CD8-positive, alpha-beta T cell (primary cell): ENCODE measurements at regions of chr2 and their contacts with region 1.

Region 1: DNA sequence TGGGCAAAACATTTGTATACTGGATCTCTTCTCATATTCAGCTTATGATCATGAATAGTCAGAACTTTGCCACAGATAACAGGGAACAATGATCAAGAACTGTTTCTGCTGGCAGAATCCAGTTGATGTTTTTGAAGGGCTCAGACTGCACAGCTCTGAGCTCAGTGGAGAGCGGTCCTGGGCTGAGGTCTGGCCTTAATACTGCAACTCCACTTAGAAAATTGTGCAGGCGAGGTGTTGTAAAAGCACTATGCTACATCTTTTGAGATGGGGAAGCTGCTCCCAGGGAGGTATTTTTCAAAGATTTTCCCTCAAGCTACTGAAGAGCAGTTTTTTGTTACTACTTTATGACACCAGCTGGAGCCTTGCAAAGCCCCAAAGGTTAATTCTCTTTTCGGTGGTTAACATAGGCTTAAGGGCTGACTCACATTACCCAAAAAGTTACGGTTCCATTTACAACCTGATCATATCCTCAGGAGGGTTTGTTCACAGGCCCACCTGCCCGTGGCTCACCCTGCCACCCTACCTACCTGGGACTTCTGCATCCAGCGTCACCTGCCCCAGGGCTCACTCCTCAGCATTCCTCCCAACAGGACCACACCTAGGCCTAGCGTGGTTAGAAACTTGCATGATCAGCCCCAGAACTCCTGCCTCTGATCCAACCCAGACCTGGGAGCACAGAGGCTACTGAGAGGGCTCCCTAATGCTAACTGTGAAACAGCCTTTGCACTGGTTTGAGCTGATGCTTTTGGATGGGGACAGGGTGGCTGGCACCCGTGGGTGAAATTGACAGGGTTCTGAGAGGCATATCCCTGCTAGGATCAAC is 114.4 kb downstream of the NCK2 start:
- DNase-seq: peak in 5 of 9 experiments; percentile 29 to 49 (median 44)
- ATAC-seq: peak; percentile 32
- H3K4me3 ChIP-seq: no peak overlapping the region
- H3K4me3 Mint-ChIP-seq: peak overlapping the region; percentile 57
- H3K27ac ChIP-seq: peak overlapping the region; percentile 32 to 71
- H3K27ac Mint-ChIP-seq: peak overlapping the region; percentile 94
- H3K4me1 ChIP-seq: peaks cover 92% of the 10 kb centered on the region
- H3K4me1 Mint-ChIP-seq: peaks cover 91% of the 10 kb centered on the region
- H3K27me3 ChIP-seq: no peaks in the 10 kb centered on the region
- H3K27me3 Mint-ChIP-seq: no peaks in the 10 kb centered on the region
- CTCF ChIP-seq: no peak

Region 2: DNA sequence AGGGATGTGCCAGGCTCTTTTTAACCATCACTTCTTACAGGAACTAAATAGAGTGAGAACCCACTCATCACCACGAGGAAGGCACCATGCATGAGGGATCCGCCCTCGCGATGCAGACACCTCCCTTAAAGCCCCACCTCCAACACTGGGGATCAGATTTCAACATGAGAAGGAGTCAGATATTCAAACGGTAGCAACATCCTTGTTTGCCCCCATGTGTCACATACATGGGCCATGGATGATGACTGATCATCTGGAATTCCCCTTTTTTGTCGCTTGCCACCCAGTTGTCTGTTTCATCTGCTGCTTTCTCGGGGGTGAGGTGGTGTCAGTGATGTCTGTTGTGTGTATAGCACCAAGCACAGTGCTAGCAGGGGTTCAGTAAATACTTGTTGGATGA is 56.5 kb before region 1 on chr2:
- CTCF ChIA-PET with region 1: interaction called, 3 read pairs
- POLR2A ChIA-PET with region 1: interaction called, 9 read pairs
- intact Hi-C with region 1: loop called (anchors 2 to 10 kb)
- DNase-seq: peak in 8 of 9 experiments; percentile 26 to 95 (median 66)
- ATAC-seq: peak; percentile 76
- H3K4me3 ChIP-seq: peak overlapping the region in 1 of 2 experiments; percentile 9
- H3K4me3 Mint-ChIP-seq: peak overlapping the region; percentile 40
- H3K27ac ChIP-seq: peak overlapping the region; percentile 51 to 88
- H3K27ac Mint-ChIP-seq: peak overlapping the region; percentile 96
- H3K4me1 ChIP-seq: peaks cover 94% of the 10 kb centered on the region
- H3K4me1 Mint-ChIP-seq: peaks cover 93% of the 10 kb centered on the region
- H3K27me3 ChIP-seq: no peaks in the 10 kb centered on the region
- H3K27me3 Mint-ChIP-seq: no peaks in the 10 kb centered on the region
- CTCF ChIP-seq: no peak

Region 3: GRCh38 chr2:105834931-105835330 is 24.1 kb before region 1 on chr2:
- CTCF ChIA-PET with region 1: interaction called, 4 read pairs
- POLR2A ChIA-PET with region 1: interaction called, 5 read pairs
- intact Hi-C with region 1: loop called in 1 of 2 experiments (anchors 2 kb)
- DNase-seq: peak in 2 of 9 experiments; percentile 29 to 60
- ATAC-seq: peak; percentile 42
- H3K4me3 ChIP-seq: no peak overlapping the region
- H3K4me3 Mint-ChIP-seq: no peak overlapping the region
- H3K27ac ChIP-seq: peak overlapping the region; percentile 36 to 62
- H3K27ac Mint-ChIP-seq: peak overlapping the region; percentile 83
- H3K4me1 ChIP-seq: peaks cover 43% of the 10 kb centered on the region
- H3K4me1 Mint-ChIP-seq: peaks cover 73% of the 10 kb centered on the region
- H3K27me3 ChIP-seq: no peaks in the 10 kb centered on the region
- H3K27me3 Mint-ChIP-seq: no peaks in the 10 kb centered on the region
- CTCF ChIP-seq: no peak

Region 4: DNA sequence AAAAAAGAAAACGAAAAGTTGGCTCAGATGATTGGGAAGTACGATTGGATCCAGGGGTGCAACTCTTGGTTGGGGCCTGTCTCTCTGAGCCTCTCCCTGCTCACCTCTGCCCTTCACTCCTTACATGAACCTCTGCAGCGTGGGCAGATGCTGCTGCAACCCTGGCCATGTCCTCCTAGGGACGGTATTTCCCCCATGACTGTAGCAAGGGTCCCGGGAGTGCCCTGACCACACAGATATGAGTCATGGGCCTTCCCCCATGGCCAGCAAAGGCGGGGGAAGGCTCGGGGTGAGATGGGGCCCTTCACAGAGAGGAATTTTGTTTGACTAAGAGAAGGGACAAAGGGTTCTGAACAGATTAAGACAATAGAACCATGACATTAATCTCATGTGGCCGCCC is 14.6 kb after region 1 on chr2:
- CTCF ChIA-PET with region 1: interaction called, 3 read pairs
- POLR2A ChIA-PET with region 1: no interaction called
- intact Hi-C with region 1: loop called in 1 of 2 experiments (anchors 1 kb)
- DNase-seq: peak in 6 of 9 experiments; percentile 35 to 86 (median 52)
- ATAC-seq: peak; percentile 58
- H3K4me3 ChIP-seq: no peak overlapping the region
- H3K4me3 Mint-ChIP-seq: no peak overlapping the region
- H3K27ac ChIP-seq: peak overlapping the region; percentile 1 to 68
- H3K27ac Mint-ChIP-seq: peak overlapping the region; percentile 89
- H3K4me1 ChIP-seq: peaks cover 96% of the 10 kb centered on the region
- H3K4me1 Mint-ChIP-seq: peaks cover 93% of the 10 kb centered on the region
- H3K27me3 ChIP-seq: no peaks in the 10 kb centered on the region
- H3K27me3 Mint-ChIP-seq: no peaks in the 10 kb centered on the region
- CTCF ChIP-seq: no peak

Region 5: DNA sequence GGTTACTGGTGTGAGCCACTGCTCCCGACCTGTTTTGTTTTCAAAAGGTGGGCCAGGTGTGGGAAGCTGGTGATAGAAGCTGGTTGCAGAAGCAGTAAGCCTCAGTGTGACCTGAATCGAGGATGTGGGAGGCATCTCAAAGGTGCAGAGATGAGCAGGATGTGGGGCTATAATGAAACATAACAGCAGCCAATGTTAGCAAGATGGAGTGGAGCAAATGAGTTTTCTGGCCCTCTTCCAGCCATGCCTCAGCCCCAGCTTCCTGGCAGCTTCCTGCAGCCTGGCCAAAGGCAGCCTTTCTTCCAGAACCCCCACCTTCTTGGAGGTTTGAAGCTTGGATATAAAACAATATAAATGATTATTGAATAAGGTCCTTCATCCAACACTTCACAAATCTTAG is 70.4 kb after region 1 on chr2:
- CTCF ChIA-PET with region 1: no interaction called
- POLR2A ChIA-PET with region 1: interaction called, 3 read pairs
- intact Hi-C with region 1: loop called in 1 of 2 experiments (anchors 2 kb)
- DNase-seq: peak in 8 of 9 experiments; percentile 26 to 81 (median 56)
- ATAC-seq: peak; percentile 79
- H3K4me3 ChIP-seq: no peak overlapping the region
- H3K4me3 Mint-ChIP-seq: peak overlapping the region; percentile 59
- H3K27ac ChIP-seq: peak overlapping the region; percentile 3 to 49
- H3K27ac Mint-ChIP-seq: peak overlapping the region; percentile 95
- H3K4me1 ChIP-seq: peaks cover 90% of the 10 kb centered on the region
- H3K4me1 Mint-ChIP-seq: peaks cover 88% of the 10 kb centered on the region
- H3K27me3 ChIP-seq: no peaks in the 10 kb centered on the region
- H3K27me3 Mint-ChIP-seq: no peaks in the 10 kb centered on the region
- CTCF ChIP-seq: no peak

Region 6: DNA sequence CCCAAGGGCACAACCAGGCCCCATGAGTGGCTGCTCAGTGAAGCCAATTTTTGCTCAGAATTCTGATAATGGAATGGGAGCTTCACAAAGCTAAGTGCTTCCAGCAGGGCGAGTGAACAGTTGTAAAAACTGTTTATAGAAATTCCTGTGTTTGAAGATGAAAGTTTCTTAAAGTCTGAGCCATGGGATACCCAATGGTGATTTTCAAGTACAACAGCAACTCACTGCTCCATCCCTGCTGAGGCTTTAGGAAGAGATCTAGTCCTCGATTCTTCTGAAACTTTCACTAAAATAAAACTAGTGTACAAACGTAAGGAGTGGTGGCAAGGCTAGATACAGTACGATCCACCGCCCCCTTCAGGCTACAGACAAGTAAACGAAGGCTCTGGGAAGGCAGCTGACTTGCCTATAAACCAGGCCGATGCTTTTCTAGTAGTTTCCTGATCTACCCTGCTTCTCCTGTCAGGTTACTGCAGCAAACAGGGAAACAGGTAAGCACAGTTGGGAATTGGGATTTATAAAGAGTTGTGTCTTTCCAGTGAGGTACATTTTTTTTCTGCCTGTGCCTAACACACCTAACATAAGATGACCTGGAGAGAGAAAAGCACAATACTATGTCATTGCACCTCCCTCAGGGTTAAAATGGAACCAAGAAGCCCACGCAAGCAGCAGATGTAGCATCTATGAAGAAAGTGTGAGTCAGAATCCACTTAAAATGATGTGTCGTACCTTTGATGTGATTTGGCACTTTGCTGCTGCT is 226.3 kb after region 1 on chr2:
- CTCF ChIA-PET with region 1: interaction called, 8 read pairs
- POLR2A ChIA-PET with region 1: no interaction called
- intact Hi-C with region 1: loop called in 1 of 2 experiments (anchors 5 kb)
- DNase-seq: peak in 7 of 9 experiments; percentile 44 to 81 (median 75)
- ATAC-seq: peak; percentile 94
- H3K4me3 ChIP-seq: peak overlapping the region in 1 of 2 experiments; percentile 5
- H3K4me3 Mint-ChIP-seq: peak overlapping the region; percentile 66
- H3K27ac ChIP-seq: peak overlapping the region; percentile 46 to 59
- H3K27ac Mint-ChIP-seq: peak overlapping the region; percentile 98
- H3K4me1 ChIP-seq: peaks cover 56% of the 10 kb centered on the region
- H3K4me1 Mint-ChIP-seq: peaks cover 72% of the 10 kb centered on the region
- H3K27me3 ChIP-seq: no peaks in the 10 kb centered on the region
- H3K27me3 Mint-ChIP-seq: no peaks in the 10 kb centered on the region
- CTCF ChIP-seq: peak; percentile 57

Region 7: DNA sequence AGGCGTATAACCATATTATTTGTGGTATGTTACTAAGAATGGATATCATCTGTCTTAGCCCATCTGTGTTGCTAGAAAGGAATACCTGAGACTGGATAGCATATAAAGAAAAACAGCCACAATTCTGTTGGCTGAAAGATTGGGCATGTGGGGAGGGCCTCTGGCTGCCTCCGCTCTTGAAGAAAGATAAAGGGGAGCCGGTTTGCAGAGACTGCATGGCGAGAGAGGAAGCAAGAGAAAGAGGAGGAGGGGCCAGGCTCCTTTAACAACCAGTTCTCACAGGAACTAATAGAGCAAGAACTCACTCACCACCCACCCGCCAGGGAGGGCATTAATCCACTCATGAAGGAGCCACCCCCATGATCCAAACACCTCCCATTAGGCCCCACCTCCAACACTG is 364.3 kb after region 1 on chr2:
- CTCF ChIA-PET with region 1: no interaction called
- POLR2A ChIA-PET with region 1: no interaction called
- intact Hi-C with region 1: no loop called
- DNase-seq: no peak
- ATAC-seq: no peak
- H3K4me3 ChIP-seq: no peak overlapping the region
- H3K4me3 Mint-ChIP-seq: no peak overlapping the region
- H3K27ac ChIP-seq: no peak overlapping the region
- H3K27ac Mint-ChIP-seq: no peak overlapping the region
- H3K4me1 ChIP-seq: no peaks in the 10 kb centered on the region
- H3K4me1 Mint-ChIP-seq: no peaks in the 10 kb centered on the region
- H3K27me3 ChIP-seq: no peaks in the 10 kb centered on the region
- H3K27me3 Mint-ChIP-seq: no peaks in the 10 kb centered on the region
- CTCF ChIP-seq: no peak